ENCODE measurements at regions of chr18 and their contacts with region 1.

Region 1: GRCh38 chr18:23207191-23207955 is 72.1 kb downstream of the CABLES1 start:
- DNase-seq: no peak
- H3K4me3 Mint-ChIP-seq: no peak overlapping the region
- H3K27ac Mint-ChIP-seq: no peak overlapping the region
- H3K4me1 Mint-ChIP-seq: peaks cover 26% of the 10 kb centered on the region
- H3K27me3 Mint-ChIP-seq: peaks cover 12% of the 10 kb centered on the region

Region 2: GRCh38 chr18:23237524-23238151 is 30.3 kb after region 1 on chr18:
- CTCF ChIA-PET with region 1: no interaction called
- POLR2A ChIA-PET with region 1: no interaction called
- intact Hi-C with region 1: loop called (anchors 1 kb)
- DNase-seq: peak; percentile 71
- H3K4me3 Mint-ChIP-seq: peak overlapping the region; percentile 45
- H3K27ac Mint-ChIP-seq: peak overlapping the region; percentile 31
- H3K4me1 Mint-ChIP-seq: peaks cover 22% of the 10 kb centered on the region
- H3K27me3 Mint-ChIP-seq: peaks cover 1% of the 10 kb centered on the region

Region 3: GRCh38 chr18:23340656-23341055 is 133.3 kb after region 1 on chr18:
- CTCF ChIA-PET with region 1: no interaction called
- POLR2A ChIA-PET with region 1: no interaction called
- intact Hi-C with region 1: loop called (anchors 5 kb)
- DNase-seq: no peak
- H3K4me3 Mint-ChIP-seq: no peak overlapping the region
- H3K27ac Mint-ChIP-seq: no peak overlapping the region
- H3K4me1 Mint-ChIP-seq: peaks cover 19% of the 10 kb centered on the region
- H3K27me3 Mint-ChIP-seq: no peaks in the 10 kb centered on the region